ENCODE measurements at regions of chr11 and their contacts with region 1.

Region 1: DNA sequence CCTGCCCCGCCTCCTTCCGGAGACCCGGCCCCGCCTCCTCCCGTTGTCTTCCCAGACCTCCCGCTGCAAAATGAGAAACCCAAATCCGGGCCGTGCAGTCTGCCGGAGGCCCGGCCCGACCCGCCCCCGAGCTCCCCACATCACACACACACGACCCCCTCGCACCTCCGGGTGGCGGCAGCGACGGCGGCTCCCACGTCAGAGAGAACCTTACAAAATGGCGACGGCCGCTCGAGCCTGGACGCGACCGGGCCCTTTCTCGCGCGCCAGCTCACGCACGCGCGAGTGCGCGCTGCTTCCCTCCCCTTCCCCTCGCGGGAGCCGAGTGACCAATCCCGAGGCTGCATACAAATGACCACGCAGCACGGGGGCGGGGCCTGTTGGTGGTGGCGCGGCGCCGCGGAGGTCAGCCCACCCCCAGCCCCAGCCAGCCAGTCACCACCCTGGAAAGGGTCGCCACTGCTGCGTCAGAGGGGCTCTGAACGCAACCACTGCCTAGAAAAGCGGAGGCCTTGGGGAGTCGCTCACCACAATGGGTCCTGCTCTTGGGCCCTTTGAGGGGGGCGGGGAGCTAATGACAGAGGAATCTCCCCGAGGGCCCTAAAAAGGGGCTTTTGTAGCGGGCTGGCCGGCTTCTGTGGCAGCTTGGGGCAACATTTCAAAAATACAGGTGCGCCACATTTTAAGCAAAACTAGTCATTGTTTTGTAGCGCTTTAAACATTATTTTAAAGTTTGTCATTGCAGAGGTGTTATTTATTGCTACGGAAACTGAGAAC is at the start of gene RBM4B:
- DNase-seq: peak; percentile 96
- H3K4me3 Mint-ChIP-seq: peak within 1 kb of the TSS; percentile 85
- H3K27ac Mint-ChIP-seq: peak within 1 kb of the TSS; percentile 97
- H3K4me1 Mint-ChIP-seq: peaks cover 36% of the 10 kb centered on the region
- H3K27me3 Mint-ChIP-seq: no peaks in the 10 kb centered on the region
- total RNA-seq, gene RBM4B: 19.6 to 20.1 TPM

Region 2: DNA sequence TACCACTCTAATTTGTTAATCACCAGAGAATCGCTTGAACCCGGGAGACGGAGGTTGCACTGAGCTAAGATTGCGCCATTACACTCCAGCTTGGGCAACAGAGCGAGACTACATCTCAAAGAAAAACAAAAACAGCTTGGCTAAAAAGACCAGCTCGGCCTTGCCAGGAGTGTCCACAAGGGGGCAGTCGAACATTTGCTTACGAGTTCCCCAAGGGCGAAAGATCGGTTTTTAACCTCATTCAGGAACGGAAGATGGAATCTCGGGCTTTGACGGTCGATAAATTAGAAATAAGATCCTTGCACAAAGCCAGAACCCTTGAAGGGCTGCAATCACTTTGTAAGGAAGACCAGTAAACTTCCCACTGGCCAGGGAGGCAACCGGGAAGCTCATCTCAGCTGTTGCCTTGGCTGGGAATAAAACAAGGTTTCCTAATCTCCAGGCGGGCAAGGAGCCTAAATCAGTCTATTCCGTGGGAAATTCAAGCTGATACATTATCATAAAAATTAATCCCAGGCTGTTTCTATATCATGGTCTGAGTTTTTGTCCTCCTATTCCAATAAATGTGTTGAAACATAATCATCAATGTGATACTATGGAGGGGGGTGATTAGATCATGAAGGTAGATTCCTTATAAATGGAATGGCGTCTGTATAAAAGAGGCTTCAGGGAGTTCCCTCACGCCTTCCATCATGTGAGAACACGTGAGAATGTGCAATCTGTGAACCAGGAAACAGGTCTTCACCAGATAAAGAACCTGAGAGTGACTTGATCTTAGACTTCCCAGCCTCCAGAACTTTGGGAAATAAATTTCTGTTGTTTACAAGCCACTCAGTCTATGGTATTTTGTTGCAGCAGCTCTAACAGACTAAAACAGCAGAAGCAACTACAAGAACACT is 291.4 kb before region 1 on chr11:
- CTCF ChIA-PET with region 1: interaction called, 13 read pairs
- POLR2A ChIA-PET with region 1: no interaction called
- DNase-seq: peak; percentile 83
- H3K4me3 Mint-ChIP-seq: peak overlapping the region; percentile 12
- H3K27ac Mint-ChIP-seq: no peak overlapping the region
- H3K4me1 Mint-ChIP-seq: peaks cover 6% of the 10 kb centered on the region
- H3K27me3 Mint-ChIP-seq: peaks cover 7% of the 10 kb centered on the region

Region 3: DNA sequence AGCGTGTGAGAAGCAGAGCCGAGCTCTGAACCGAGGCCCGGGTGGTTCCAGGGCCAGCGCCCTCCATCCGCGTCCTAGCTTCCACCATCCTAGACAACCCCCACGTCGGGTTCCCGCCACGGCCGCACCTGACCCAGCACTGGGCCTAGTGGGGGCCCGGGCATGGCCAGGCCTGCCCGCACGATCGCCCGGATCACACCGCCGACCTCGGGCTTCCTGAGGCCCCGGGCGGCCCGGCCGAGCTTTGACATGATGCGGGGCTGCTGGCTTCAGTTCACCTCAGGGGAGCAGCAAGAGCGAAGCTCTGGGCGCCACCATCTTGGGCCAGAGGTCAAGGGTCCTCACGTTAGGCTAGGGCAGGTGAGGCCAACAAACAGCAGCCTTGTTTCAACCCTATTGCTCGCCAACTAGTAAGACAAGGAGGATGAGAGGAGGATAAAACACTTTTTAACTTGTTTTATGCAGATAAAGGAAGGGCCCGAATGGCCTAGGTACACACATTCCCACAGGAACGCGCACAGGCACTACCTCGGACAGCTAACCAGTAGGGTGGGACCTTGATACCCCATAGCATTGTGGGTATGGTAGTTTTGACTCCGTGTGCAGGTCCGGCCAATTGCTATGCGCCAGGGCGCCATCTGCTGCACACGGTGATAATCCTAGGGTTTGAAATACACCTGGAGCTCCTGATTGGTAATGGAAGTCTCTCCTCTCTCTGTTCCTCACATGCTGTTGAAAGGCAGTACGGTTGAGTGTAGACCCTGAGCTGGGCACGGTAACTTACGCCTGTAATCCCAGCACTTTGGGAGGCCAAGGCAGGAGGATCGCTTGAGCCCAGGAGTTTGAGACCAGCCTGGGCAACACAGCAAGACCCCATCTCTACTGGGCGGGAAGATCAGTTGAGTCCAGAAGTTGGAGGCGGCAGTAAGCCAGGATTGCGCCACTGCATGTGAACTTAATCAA is 239.0 kb before region 1 on chr11 and contains the start of gene MRPL11:
- CTCF ChIA-PET with region 1: interaction called, 13 read pairs
- POLR2A ChIA-PET with region 1: interaction called, 9 read pairs
- DNase-seq: peak; percentile 91
- H3K4me3 Mint-ChIP-seq: peak within 1 kb of the TSS; percentile 88
- H3K27ac Mint-ChIP-seq: peak within 1 kb of the TSS; percentile 89
- H3K4me1 Mint-ChIP-seq: peaks cover 24% of the 10 kb centered on the region
- H3K27me3 Mint-ChIP-seq: no peaks in the 10 kb centered on the region
- total RNA-seq, gene MRPL11: 44.2 to 55.3 TPM

Region 4: DNA sequence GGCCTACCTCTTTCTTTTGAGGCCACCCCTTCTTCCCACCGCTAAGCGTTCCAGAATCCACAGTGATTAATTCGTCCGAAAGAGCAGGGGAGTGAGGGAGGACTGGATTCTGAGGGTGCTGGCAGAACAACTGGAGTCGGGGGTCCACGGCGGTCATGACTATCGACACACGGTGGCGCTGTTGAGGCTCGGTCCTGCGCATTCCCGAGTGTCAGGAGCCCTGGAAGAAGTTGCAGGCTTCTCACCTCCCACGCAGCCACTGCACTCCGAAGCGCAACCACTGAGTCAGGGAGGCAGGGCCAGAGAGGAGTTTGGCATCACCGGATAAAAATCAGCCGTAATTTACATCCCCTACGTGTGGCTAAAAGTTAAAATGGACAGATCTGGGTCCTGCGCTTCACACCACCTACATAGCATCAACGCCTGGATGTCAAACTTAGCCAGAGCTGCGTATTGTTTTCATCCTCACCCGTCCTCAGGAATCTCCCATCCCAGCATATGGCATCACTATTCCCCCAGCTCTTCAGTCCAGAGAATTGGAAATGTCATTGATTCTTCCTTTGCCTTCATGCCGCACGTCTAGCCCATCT is 98.7 kb before region 1 on chr11:
- CTCF ChIA-PET with region 1: interaction called, 90 read pairs
- POLR2A ChIA-PET with region 1: interaction called, 12 read pairs
- DNase-seq: peak; percentile 71
- H3K4me3 Mint-ChIP-seq: no peak overlapping the region
- H3K27ac Mint-ChIP-seq: no peak overlapping the region
- H3K4me1 Mint-ChIP-seq: peaks cover 5% of the 10 kb centered on the region
- H3K27me3 Mint-ChIP-seq: peaks cover 12% of the 10 kb centered on the region

Region 5: GRCh38 chr11:66638177-66639065 is 39.4 kb before region 1 on chr11 and contains the start of gene RBM4:
- CTCF ChIA-PET with region 1: interaction called, 26 read pairs
- POLR2A ChIA-PET with region 1: interaction called, 42 read pairs
- DNase-seq: peak; percentile 98
- H3K4me3 Mint-ChIP-seq: peak within 1 kb of the TSS; percentile 91
- H3K27ac Mint-ChIP-seq: peak within 1 kb of the TSS; percentile 91
- H3K4me1 Mint-ChIP-seq: peaks cover 60% of the 10 kb centered on the region
- H3K27me3 Mint-ChIP-seq: no peaks in the 10 kb centered on the region
- total RNA-seq, gene RBM4: 109 to 110 TPM

Region 6: DNA sequence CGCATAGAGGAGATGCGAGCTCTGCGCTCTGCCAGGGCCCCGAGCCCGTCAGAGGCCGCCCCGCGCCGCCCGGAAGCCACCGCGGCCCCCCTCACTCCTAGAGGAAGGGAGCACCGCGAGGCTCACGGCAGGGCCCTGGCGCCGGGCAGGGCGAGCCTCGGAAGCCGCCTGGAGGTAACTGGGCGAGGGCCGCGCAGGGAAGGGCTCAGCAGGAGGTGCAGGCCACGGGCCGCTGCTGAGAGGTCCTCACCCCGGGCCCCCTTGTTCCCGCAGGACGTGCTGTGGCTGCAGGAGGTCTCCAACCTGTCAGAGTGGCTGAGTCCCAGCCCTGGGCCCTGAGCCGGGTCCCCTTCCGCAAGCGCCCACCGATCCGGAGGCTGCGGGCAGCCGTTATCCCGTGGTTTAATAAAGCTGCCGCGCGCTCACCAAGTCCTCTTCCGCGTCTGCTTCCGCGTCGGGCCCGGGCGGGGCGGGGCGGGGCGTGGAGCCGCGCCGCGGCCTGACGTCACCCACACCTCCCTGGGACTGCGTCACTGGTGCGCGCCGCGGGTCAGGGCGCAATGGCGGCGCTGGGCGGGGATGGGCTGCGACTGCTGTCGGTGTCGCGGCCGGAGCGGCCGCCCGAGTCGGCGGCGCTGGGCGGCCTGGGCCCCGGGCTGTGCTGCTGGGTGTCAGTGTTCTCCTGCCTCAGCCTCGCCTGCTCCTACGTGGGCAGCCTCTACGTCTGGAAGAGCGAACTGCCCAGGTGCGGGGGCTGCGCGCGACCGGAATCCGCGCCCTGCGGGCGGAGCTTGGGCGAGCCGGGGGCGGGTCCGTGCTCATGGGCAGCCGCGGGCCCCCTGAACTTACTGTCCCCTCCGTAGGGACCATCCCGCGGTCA is 165.3 kb after region 1 on chr11 and contains the start of gene RCE1:
- CTCF ChIA-PET with region 1: interaction called, 7 read pairs
- POLR2A ChIA-PET with region 1: interaction called, 36 read pairs
- DNase-seq: peak; percentile 93
- H3K4me3 Mint-ChIP-seq: peak within 1 kb of the TSS; percentile 93
- H3K27ac Mint-ChIP-seq: peak within 1 kb of the TSS; percentile 93
- H3K4me1 Mint-ChIP-seq: peaks cover 58% of the 10 kb centered on the region
- H3K27me3 Mint-ChIP-seq: no peaks in the 10 kb centered on the region
- total RNA-seq, gene RCE1: 21.2 to 22.0 TPM

Measured in activated CD4-positive, alpha-beta memory T cell treated with anti-CD3 and anti-CD28 coated beads, Interleukin-2, amount 10 ng/mL, durations not matched to agents 7 days and 5 days (primary cell).